Testis (tissue), 5 donors: ENCODE measurements at regions of chr1 and their contacts with region 1.

Region 1: GRCh38 chr1:235328357-235329138 is at the start of gene GGPS1:
- DNase-seq: peak; percentile 98
- H3K4me3 ChIP-seq: peak within 1 kb of the TSS; percentile 96 to 100
- H3K27ac ChIP-seq: peak within 1 kb of the TSS; percentile 99
- H3K4me1 ChIP-seq: peaks cover 15% of the 10 kb centered on the region
- H3K27me3 ChIP-seq: no peaks in the 10 kb centered on the region
- CTCF ChIP-seq: no peak
- POLR2A ChIP-seq: peak; percentile 75
- total RNA-seq, gene GGPS1: 29.4 to 37.4 TPM

Region 2: GRCh38 chr1:235105051-235106043 is 223.2 kb before region 1 on chr1:
- intact Hi-C with region 1: loop called (anchors 10 kb)
- DNase-seq: no peak
- H3K4me3 ChIP-seq: no peak overlapping the region
- H3K27ac ChIP-seq: no peak overlapping the region
- H3K4me1 ChIP-seq: peaks cover 6% of the 10 kb centered on the region
- H3K27me3 ChIP-seq: no peaks in the 10 kb centered on the region
- CTCF ChIP-seq: no peak
- POLR2A ChIP-seq: no peak